H1 (cell line): ENCODE measurements at regions of chr14 and their contacts with region 1.

Region 1: DNA sequence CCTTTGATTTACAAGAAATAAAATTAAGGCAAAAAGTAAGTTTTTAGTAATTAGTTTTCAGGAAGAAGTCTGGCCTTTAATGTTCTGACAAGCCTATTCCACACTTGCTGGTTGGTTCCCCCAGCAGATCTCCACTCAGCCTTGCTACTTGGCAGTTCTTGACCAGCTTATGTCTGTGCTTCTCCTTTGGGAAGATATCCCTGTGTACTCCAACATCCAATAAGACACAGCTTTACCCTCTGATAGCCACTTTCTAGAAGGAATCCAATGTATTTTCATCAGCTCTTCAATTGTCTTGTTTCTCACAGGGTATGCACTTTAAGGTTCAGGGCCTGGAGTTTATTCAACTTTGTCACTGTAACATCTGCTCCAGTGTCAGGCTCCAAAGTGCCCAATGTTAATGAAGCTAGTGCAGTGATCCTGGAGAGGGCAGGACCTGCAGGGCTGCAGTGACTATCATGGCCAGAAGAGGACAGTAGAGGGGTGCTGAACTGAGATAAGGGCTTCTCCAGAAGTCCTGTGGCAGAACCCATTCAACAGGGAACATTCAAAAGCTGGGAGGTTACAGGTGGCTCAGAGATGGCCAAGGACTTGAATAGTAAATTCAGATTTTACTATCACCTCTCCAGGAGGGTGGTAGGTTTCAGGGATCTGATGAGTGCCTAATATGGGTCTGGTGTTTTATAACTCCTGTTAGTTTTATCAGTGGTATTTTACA is 22.9 kb downstream of the JKAMP start:
- DNase-seq: peak; percentile 58 to 90
- H3K4me3 ChIP-seq: no peak overlapping the region
- H3K27ac ChIP-seq: no peak overlapping the region
- H3K4me1 ChIP-seq: peaks cover 0 to 3% (median under 1%) of the 10 kb centered on the region in 4 experiments; a peak in 2 of 7 replicates
- H3K27me3 ChIP-seq: no peaks in the 10 kb centered on the region
- CTCF ChIP-seq: peak; percentile 88 to 99 (median 96)
- EP300 ChIP-seq: no peak
- POLR2A ChIP-seq: no peak
- RAD21 ChIP-seq: peak; percentile 88 to 93

Region 2: GRCh38 chr14:59464486-59465315 is 42.5 kb before region 1 on chr14:
- CTCF ChIA-PET with region 1: interaction called, 11 read pairs
- POLR2A ChIA-PET with region 1: no interaction called
- DNase-seq: peak in 1 of 2 experiments; percentile 79
- H3K4me3 ChIP-seq: peak overlapping the region; percentile 46 to 74 (median 53)
- H3K27ac ChIP-seq: no peak overlapping the region
- H3K4me1 ChIP-seq: peaks cover 0 to 10% (median 4%) of the 10 kb centered on the region in 4 experiments; a peak in 4 of 7 replicates
- H3K27me3 ChIP-seq: peaks cover 0 to 23% (median 13%) of the 10 kb centered on the region in 4 experiments; a peak in 6 of 7 replicates
- CTCF ChIP-seq: 0 out of 4 replicates have a peak, but pooled peaks of 1 of the 3 experiments have one; percentile 6
- EP300 ChIP-seq: no peak
- POLR2A ChIP-seq: no peak
- RAD21 ChIP-seq: no peak

Region 3: GRCh38 chr14:59490756-59491155 is 16.5 kb before region 1 on chr14:
- CTCF ChIA-PET with region 1: interaction called, 16 read pairs
- POLR2A ChIA-PET with region 1: no interaction called
- DNase-seq: no peak
- H3K4me3 ChIP-seq: no peak overlapping the region
- H3K27ac ChIP-seq: no peak overlapping the region
- H3K4me1 ChIP-seq: no peaks in the 10 kb centered on the region
- H3K27me3 ChIP-seq: no peaks in the 10 kb centered on the region
- CTCF ChIP-seq: no peak
- EP300 ChIP-seq: no peak
- POLR2A ChIP-seq: no peak
- RAD21 ChIP-seq: no peak

Region 4: DNA sequence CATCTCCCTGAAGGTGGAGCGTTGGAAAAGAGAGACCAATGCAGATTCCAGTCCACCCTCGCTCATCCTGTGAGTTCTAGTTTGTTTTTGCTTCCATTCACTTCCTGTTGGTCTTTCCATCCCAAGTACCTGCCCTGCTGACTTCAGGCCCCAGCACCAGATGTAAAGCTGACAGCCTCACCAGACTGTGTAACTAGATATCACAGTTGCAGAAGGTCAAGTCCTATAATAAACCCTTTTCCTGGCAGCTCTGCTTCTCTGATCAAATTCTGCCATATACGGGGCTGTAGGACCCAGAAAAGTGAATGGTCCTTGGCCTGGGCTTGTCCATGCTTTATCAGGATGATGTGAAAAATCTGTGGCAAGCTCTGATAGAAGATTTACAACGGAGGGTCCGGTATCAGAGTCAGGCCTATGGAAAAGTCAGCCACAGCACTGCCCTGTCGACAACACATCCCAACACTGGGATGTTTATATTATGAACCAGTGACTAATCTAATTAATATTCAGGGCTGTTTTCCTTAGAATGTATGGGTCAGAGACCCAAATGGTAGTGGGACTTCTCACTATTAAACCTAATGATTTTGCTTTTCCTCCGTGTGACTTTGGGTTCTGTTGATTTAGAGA is 27.3 kb after region 1 on chr14:
- CTCF ChIA-PET with region 1: interaction called, 10 read pairs
- POLR2A ChIA-PET with region 1: no interaction called
- DNase-seq: no peak
- H3K4me3 ChIP-seq: no peak overlapping the region
- H3K27ac ChIP-seq: no peak overlapping the region
- H3K4me1 ChIP-seq: no peaks in the 10 kb centered on the region
- H3K27me3 ChIP-seq: no peaks in the 10 kb centered on the region
- CTCF ChIP-seq: no peak
- EP300 ChIP-seq: no peak
- POLR2A ChIP-seq: no peak
- RAD21 ChIP-seq: no peak

Region 5: DNA sequence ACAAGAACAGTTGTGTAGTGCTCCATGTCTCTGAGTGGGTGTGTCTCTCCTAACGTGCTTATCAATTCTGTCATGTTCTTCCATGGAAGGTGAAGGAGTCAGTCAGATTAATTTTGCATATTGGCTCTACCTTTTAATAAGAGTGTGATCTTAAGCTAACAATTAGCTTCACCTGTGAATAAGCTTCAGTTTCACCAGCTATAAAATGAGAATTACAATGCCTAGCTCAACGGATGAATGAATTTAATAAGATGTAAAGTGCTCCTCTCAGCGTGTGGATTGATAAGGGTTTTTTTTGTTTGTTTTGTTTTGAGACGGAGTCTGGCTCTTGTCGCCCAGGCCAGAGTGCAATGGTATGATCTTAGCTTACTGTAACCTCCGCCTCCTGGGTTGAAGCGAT is 36.7 kb after region 1 on chr14:
- CTCF ChIA-PET with region 1: interaction called, 15 read pairs
- POLR2A ChIA-PET with region 1: no interaction called
- DNase-seq: no peak
- H3K4me3 ChIP-seq: no peak overlapping the region
- H3K27ac ChIP-seq: no peak overlapping the region
- H3K4me1 ChIP-seq: peaks cover 0 to 3% (median 0%) of the 10 kb centered on the region in 4 experiments; a peak in 1 of 7 replicates
- H3K27me3 ChIP-seq: no peaks in the 10 kb centered on the region
- CTCF ChIP-seq: no peak
- EP300 ChIP-seq: no peak
- POLR2A ChIP-seq: no peak
- RAD21 ChIP-seq: no peak

Region 6: DNA sequence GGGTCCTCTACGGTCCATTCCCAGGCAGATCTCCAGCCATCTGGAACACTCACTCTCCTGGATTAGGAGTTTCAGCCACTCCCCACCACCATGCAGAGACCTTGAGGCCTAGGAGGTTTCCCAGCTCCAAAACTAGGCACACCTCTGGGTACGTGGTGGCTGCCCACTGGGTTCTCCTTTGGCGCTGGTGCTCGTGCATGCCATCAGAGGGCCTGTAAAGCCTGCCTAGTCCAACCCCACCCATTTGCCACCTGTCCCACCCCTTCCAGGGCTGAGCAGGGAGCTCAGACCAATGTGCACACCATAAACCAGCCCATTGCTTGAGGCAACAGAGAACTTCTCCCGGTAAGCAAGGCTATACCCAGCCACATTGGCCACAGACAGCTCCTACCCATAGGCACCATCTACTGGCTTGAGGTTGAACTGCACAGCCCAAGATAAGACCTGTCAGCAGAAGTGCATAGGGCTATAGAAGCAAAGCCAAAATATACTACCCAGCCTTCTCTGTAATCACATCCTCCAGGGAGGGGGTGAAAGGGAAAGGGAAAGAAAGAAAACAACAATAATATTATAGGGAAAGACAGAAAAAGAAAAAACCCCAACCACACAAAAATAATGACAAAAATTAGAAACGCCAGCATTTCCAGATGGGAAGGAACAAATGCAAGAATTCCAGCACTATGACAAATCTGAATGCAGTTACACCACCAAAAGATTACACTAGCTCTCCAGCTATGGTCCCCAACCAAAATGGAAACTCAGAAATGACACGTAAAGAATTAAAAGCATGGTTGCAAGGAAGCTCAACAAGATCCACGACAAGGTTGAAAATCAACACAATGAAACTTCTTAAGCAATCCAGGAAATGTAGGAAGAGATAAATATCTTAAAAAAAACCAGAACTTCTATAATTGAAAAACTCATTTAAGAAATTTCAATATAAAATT is 181.3 kb after region 1 on chr14:
- CTCF ChIA-PET with region 1: interaction called, 12 read pairs
- POLR2A ChIA-PET with region 1: no interaction called
- DNase-seq: peak; percentile 19 to 76
- H3K4me3 ChIP-seq: no peak overlapping the region
- H3K27ac ChIP-seq: no peak overlapping the region
- H3K4me1 ChIP-seq: no peaks in the 10 kb centered on the region
- H3K27me3 ChIP-seq: no peaks in the 10 kb centered on the region
- CTCF ChIP-seq: peak; percentile 61 to 85 (median 78)
- EP300 ChIP-seq: no peak
- POLR2A ChIP-seq: no peak
- RAD21 ChIP-seq: peak; percentile 75 to 79

Region 7: DNA sequence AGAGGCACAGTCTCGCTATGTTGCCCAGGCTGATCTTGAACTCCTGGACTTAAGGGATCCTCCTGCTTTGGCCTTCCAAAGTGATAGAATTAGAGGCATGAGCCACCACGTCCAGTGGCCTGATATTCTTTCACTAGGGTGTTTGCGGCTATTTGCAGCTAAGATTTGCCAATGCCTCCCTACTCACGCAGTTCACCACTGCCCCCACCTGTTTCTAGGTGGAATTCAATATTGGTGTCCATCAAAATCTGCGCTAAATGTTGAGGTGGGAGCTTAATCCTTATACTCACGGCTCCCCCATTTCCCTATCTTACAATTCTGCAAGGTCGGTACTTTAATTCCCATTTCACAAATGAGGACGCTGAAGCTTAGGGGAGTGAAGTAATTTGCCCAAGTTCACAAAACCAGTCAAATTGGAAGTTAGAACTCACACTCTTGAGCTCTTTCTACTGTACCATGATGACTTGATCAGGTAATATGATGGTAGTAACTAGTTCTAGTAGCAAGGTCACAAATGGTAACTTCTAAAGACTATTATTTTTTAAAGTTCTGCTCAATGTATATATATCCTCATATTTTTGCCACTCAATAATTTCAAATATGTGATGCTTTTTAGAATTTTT is 390.6 kb after region 1 on chr14:
- CTCF ChIA-PET with region 1: interaction called, 15 read pairs
- POLR2A ChIA-PET with region 1: no interaction called
- DNase-seq: peak in 1 of 2 experiments; percentile 10
- H3K4me3 ChIP-seq: no peak overlapping the region
- H3K27ac ChIP-seq: no peak overlapping the region
- H3K4me1 ChIP-seq: no peaks in the 10 kb centered on the region
- H3K27me3 ChIP-seq: no peaks in the 10 kb centered on the region
- CTCF ChIP-seq: peak; percentile 52 to 81 (median 76)
- EP300 ChIP-seq: no peak
- POLR2A ChIP-seq: no peak
- RAD21 ChIP-seq: peak; percentile 92